BJ (cell line): ENCODE measurements at regions of chr6 and their contacts with region 1.

Region 1: GRCh38 chr6:148570451-148570850 is 176.4 kb upstream of the UST start:
- DNase-seq: no peak
- H3K4me3 ChIP-seq: no peak overlapping the region
- H3K27me3 ChIP-seq: no peaks in the 10 kb centered on the region
- CTCF ChIP-seq: no peak

Region 2: DNA sequence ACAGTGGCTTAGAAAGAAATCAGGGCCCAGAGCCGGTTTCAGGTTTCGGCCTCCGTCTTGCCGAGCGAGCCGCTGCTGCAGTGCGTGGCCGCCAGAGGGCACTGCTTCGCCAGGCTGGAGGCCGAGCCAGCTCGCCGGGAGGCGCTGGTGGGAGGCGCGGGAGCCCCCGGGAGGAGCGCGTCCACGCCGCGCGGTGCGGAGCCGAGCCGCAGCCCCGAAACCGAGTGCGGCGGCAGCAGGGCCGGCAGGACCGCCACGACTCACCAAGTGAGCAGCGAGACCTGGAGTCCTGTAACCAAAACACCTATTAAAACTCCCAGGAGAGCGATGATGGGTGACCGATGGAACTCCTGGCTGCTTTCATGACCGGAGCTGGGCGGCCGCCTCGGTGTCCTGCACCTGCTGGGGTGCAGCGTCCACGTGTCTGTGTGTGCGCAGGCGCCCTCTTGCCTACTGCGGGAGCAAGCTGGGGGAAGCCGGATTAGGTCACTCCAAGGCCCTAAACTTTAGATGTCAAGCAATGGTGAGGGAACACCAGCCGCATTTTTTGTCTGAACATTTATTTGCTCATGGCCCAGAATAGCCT is 10.5 kb before region 1 on chr6:
- CTCF ChIA-PET with region 1: interaction called, 38 read pairs
- POLR2A ChIA-PET with region 1: no interaction called
- DNase-seq: no peak
- H3K4me3 ChIP-seq: peak overlapping the region; percentile 48
- H3K27me3 ChIP-seq: no peaks in the 10 kb centered on the region
- CTCF ChIP-seq: peak; percentile 90